GM12878 (cell line): ENCODE measurements at regions of chr4 and their contacts with region 1.

Region 1: GRCh38 chr4:143558823-143559756 is 45.6 kb downstream of the SMARCA5 start:
- DNase-seq: peak; percentile 50
- ATAC-seq: peak; percentile 88
- H3K4me3 ChIP-seq: peak overlapping the region; percentile 62
- H3K27ac ChIP-seq: no peak overlapping the region
- H3K4me1 ChIP-seq: peaks cover 16% of the 10 kb centered on the region
- H3K27me3 ChIP-seq: no peaks in the 10 kb centered on the region
- CTCF ChIP-seq: peak; percentile 68 to 99 (median 85); a peak in 5 of 6 replicates
- EP300 ChIP-seq: no peak
- POLR2A ChIP-seq: peak; percentile 78
- RAD21 ChIP-seq: peak; percentile 74

Region 2: DNA sequence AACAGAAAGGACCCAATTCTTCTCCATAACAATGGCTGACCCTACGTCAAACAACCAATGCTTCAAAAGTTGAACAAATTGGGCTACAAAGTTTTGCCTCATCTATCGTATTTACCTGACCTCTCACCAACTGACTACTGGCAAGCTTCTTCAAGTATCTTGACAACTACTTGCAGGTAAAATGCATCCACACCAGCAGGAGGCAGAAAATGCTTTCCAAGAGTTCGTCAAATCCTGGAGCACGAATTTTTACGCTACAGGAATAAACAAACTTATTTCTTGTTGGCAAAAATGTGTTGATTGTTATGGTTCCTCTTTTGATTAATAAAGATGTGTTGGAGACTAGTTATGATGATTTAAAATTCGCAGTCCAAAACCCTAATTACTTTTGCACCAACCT is 229.1 kb before region 1 on chr4:
- CTCF ChIA-PET with region 1: no interaction called
- POLR2A ChIA-PET with region 1: no interaction called
- RAD21 ChIA-PET with region 1: no interaction called
- SMC1A ChIA-PET with region 1: no interaction called
- in situ Hi-C with region 1: no loop called
- intact Hi-C with region 1: no loop called
- DNase-seq: no peak
- ATAC-seq: no peak
- H3K4me3 ChIP-seq: no peak overlapping the region
- H3K27ac ChIP-seq: no peak overlapping the region
- H3K4me1 ChIP-seq: no peaks in the 10 kb centered on the region
- H3K27me3 ChIP-seq: 0 out of 4 replicates have a peak, but pooled peaks cover 0 to 3% of the 10 kb centered on the region in 2 experiments
- CTCF ChIP-seq: no peak
- EP300 ChIP-seq: no peak
- POLR2A ChIP-seq: no peak
- RAD21 ChIP-seq: no peak

Region 3: DNA sequence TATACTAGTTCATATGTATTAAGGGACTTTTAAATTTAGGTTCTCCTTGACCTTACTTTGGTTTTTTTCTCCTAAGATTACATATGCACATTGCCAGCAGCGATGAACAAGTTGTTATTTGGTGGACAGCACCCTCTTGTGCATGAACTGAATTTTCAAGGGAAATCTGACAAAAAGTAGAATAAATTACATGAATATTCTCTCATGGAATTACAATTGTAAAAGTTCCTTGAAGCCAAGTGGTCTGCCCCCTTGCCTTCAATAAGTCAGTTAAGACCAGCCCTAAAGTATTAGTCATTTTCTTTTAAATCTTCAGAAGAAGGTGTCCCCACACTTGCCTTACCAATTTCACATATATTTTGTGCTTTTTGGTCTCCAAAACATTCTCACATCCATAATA is 76.2 kb before region 1 on chr4:
- CTCF ChIA-PET with region 1: no interaction called
- POLR2A ChIA-PET with region 1: no interaction called
- RAD21 ChIA-PET with region 1: no interaction called
- SMC1A ChIA-PET with region 1: no interaction called
- in situ Hi-C with region 1: no loop called
- intact Hi-C with region 1: no loop called
- DNase-seq: no peak
- ATAC-seq: peak; percentile 83
- H3K4me3 ChIP-seq: no peak overlapping the region
- H3K27ac ChIP-seq: no peak overlapping the region
- H3K4me1 ChIP-seq: no peaks in the 10 kb centered on the region
- H3K27me3 ChIP-seq: no peaks in the 10 kb centered on the region; a peak in 1 of 4 replicates
- CTCF ChIP-seq: peak; percentile 38 to 74 (median 42); a peak in 4 of 6 replicates
- EP300 ChIP-seq: no peak
- POLR2A ChIP-seq: no peak
- RAD21 ChIP-seq: peak; percentile 94

Region 4: GRCh38 chr4:143524211-143524610 is 34.9 kb before region 1 on chr4:
- CTCF ChIA-PET with region 1: no interaction called
- POLR2A ChIA-PET with region 1: no interaction called
- RAD21 ChIA-PET with region 1: no interaction called
- SMC1A ChIA-PET with region 1: no interaction called
- in situ Hi-C with region 1: no loop called
- intact Hi-C with region 1: no loop called
- DNase-seq: no peak
- ATAC-seq: no peak
- H3K4me3 ChIP-seq: no peak overlapping the region
- H3K27ac ChIP-seq: no peak overlapping the region
- H3K4me1 ChIP-seq: no peaks in the 10 kb centered on the region
- H3K27me3 ChIP-seq: no peaks in the 10 kb centered on the region
- CTCF ChIP-seq: no peak
- EP300 ChIP-seq: no peak
- POLR2A ChIP-seq: no peak
- RAD21 ChIP-seq: no peak

Region 5: GRCh38 chr4:143575331-143575730 is 16.2 kb after region 1 on chr4:
- CTCF ChIA-PET with region 1: interaction called, 3 read pairs
- POLR2A ChIA-PET with region 1: no interaction called
- RAD21 ChIA-PET with region 1: no interaction called
- SMC1A ChIA-PET with region 1: interaction called, 10 read pairs
- in situ Hi-C with region 1: no loop called
- intact Hi-C with region 1: no loop called
- DNase-seq: no peak
- ATAC-seq: no peak
- H3K4me3 ChIP-seq: no peak overlapping the region
- H3K27ac ChIP-seq: no peak overlapping the region
- H3K4me1 ChIP-seq: no peaks in the 10 kb centered on the region
- H3K27me3 ChIP-seq: no peaks in the 10 kb centered on the region
- CTCF ChIP-seq: no peak
- EP300 ChIP-seq: no peak
- POLR2A ChIP-seq: no peak
- RAD21 ChIP-seq: no peak

Region 6: DNA sequence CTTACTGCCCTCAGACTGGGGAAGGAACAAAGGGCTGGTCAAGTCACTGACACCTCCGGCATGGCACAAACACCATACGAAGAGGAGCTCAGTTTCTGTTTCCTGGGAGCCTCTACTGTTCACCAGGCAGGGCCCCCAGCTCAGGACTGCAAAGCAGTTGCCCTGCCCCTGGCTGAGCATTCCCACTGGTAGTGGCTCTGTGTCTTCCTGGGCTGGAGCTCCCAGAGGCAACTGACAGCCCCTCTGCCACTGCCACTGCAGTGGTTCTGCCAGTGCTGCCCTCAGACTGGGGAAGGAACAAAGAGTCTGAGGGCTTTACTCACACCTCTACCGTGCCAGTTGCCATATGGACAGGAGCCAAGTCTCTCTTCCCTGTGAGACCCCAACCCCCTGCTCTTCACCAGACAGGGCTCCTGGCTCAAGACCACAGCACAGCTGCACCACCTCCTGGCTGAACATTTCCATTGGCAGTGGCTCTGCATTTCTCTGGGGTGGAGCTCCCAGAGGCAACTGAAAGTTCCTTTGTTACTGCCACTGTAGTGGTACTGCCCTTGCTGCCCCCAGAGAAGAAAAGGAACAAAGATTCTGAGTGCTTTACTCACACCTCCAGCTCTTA is 22.3 kb after region 1 on chr4:
- CTCF ChIA-PET with region 1: interaction called, 10 read pairs
- POLR2A ChIA-PET with region 1: no interaction called
- RAD21 ChIA-PET with region 1: interaction called, 3 read pairs
- SMC1A ChIA-PET with region 1: no interaction called
- in situ Hi-C with region 1: no loop called
- intact Hi-C with region 1: no loop called
- DNase-seq: no peak
- ATAC-seq: no peak
- H3K4me3 ChIP-seq: no peak overlapping the region
- H3K27ac ChIP-seq: no peak overlapping the region
- H3K4me1 ChIP-seq: no peaks in the 10 kb centered on the region
- H3K27me3 ChIP-seq: no peaks in the 10 kb centered on the region
- CTCF ChIP-seq: peak in 1 of 3 experiments; percentile 5; a peak in 1 of 6 replicates
- EP300 ChIP-seq: no peak
- POLR2A ChIP-seq: no peak
- RAD21 ChIP-seq: no peak

Region 7: DNA sequence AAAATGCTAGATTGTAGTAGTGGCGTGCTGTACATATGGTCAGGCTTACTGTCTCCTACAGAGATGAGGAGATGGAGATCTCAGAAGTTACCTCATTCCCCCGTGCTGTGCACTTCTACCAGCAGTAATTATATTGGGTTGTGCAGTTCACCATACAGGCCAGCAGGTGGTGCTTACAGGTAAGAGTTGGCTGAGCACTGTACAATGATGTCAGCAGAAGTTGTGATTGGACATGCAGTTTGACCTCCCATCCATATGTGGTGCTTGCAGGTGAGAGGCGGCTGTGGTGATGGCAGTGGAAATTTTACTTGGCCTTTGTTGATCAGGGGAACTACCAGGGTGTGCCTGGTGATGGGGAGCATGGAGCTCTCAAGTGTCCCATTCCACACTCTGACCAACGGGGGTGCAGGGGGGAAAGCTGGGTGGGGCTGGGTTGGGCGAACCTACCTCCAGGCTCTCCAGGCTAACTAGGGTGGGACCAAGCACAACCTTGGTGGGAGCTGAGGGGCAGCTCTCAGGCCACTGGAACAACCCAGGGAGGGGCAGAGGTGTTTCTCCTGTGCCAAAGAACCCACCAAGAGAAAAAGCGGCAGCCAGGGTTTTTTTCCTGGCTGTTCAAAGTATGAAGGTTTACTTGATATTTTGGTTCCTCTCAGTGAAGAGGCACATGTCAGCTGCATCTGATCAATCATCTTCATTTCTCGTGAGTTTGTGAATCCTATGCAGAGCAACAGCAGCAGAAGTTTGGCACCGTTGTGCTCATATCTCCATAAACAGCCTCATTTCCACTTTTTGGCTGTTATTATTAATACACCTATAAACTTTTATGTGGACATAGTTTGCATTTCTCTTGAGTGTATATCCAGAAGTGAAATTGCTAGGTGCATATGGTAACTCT is 215.2 kb after region 1 on chr4:
- CTCF ChIA-PET with region 1: interaction called, 7 read pairs
- POLR2A ChIA-PET with region 1: no interaction called
- RAD21 ChIA-PET with region 1: no interaction called
- SMC1A ChIA-PET with region 1: interaction called, 4 read pairs
- in situ Hi-C with region 1: no loop called
- intact Hi-C with region 1: loop called (anchors 5 kb)
- DNase-seq: peak; percentile 31
- ATAC-seq: peak; percentile 100
- H3K4me3 ChIP-seq: no peak overlapping the region
- H3K27ac ChIP-seq: no peak overlapping the region
- H3K4me1 ChIP-seq: no peaks in the 10 kb centered on the region
- H3K27me3 ChIP-seq: no peaks in the 10 kb centered on the region
- CTCF ChIP-seq: peak; percentile 76 to 89 (median 87); a peak in 5 of 6 replicates
- EP300 ChIP-seq: no peak
- POLR2A ChIP-seq: no peak
- RAD21 ChIP-seq: peak; percentile 92

Region 8: GRCh38 chr4:143921181-143921580 is 362.1 kb after region 1 on chr4:
- CTCF ChIA-PET with region 1: no interaction called
- POLR2A ChIA-PET with region 1: no interaction called
- RAD21 ChIA-PET with region 1: no interaction called
- SMC1A ChIA-PET with region 1: no interaction called
- in situ Hi-C with region 1: loop called (anchors 25 kb)
- intact Hi-C with region 1: no loop called
- DNase-seq: no peak
- ATAC-seq: no peak
- H3K4me3 ChIP-seq: no peak overlapping the region
- H3K27ac ChIP-seq: no peak overlapping the region
- H3K4me1 ChIP-seq: no peaks in the 10 kb centered on the region
- H3K27me3 ChIP-seq: no peaks in the 10 kb centered on the region
- CTCF ChIP-seq: no peak
- EP300 ChIP-seq: no peak
- POLR2A ChIP-seq: no peak
- RAD21 ChIP-seq: no peak

Region 9: GRCh38 chr4:144141493-144141892 is 582.4 kb after region 1 on chr4:
- CTCF ChIA-PET with region 1: no interaction called
- POLR2A ChIA-PET with region 1: no interaction called
- RAD21 ChIA-PET with region 1: no interaction called
- SMC1A ChIA-PET with region 1: no interaction called
- in situ Hi-C with region 1: no loop called
- intact Hi-C with region 1: loop called (anchors 10 kb)
- DNase-seq: no peak
- ATAC-seq: no peak
- H3K4me3 ChIP-seq: no peak overlapping the region
- H3K27ac ChIP-seq: no peak overlapping the region
- H3K4me1 ChIP-seq: no peaks in the 10 kb centered on the region
- H3K27me3 ChIP-seq: no peaks in the 10 kb centered on the region
- CTCF ChIP-seq: no peak
- EP300 ChIP-seq: no peak
- POLR2A ChIP-seq: no peak
- RAD21 ChIP-seq: no peak